ENCODE measurements at regions of chr1 and their contacts with region 1.

Region 1: GRCh38 chr1:39239968-39240367 is 35.5 kb downstream of the MACF1 start:
- DNase-seq: no peak
- H3K4me3 ChIP-seq: no peak overlapping the region
- H3K27ac ChIP-seq: no peak overlapping the region
- H3K4me1 ChIP-seq: no peaks in the 10 kb centered on the region
- H3K27me3 ChIP-seq: no peaks in the 10 kb centered on the region
- CTCF ChIP-seq: no peak

Region 2: GRCh38 chr1:39204441-39205081 is 35.4 kb before region 1 on chr1 and contains the start of gene MACF1:
- intact Hi-C with region 1: loop called (anchors 5 kb)
- DNase-seq: peak; percentile 60
- H3K4me3 ChIP-seq: peak within 1 kb of the TSS; percentile 28
- H3K27ac ChIP-seq: peak within 1 kb of the TSS; percentile 82
- H3K4me1 ChIP-seq: no peaks in the 10 kb centered on the region
- H3K27me3 ChIP-seq: no peaks in the 10 kb centered on the region
- CTCF ChIP-seq: peak; percentile 11
- total RNA-seq, gene MACF1: 107 to 148 TPM

Measured in colonic mucosa (tissue), 4 donors.